Dorsolateral prefrontal cortex (tissue), 120 donors: ENCODE measurements at regions of chr1 and their contacts with region 1.

Region 1: DNA sequence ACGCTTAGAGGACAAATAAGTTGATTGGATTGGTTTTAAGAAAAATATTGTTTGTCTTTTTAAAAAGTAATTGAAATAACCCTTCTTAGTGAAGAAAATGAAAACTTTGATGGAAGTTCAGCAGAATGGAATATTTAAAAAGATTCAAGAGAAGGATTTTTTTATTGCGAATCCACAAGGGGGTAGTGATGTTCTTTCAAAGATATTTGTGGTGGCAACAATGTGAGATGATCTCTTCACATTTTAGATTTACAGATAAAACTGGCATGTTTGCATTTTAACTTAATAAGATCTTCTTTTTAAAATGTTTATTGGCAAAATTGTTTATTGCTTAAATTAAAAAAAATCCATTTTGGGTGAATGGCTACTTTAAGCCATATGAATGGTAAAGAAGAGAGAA is 8.9 kb downstream of the CAMTA1 start:
- DNase-seq: no peak
- H3K4me3 ChIP-seq: no peak overlapping the region
- H3K27ac ChIP-seq: no peak overlapping the region
- H3K27me3 ChIP-seq: no peaks in the 10 kb centered on the region
- CTCF ChIP-seq: peak in 55 of 56 donors; percentile 47 to 83 (median 65)

Region 2: DNA sequence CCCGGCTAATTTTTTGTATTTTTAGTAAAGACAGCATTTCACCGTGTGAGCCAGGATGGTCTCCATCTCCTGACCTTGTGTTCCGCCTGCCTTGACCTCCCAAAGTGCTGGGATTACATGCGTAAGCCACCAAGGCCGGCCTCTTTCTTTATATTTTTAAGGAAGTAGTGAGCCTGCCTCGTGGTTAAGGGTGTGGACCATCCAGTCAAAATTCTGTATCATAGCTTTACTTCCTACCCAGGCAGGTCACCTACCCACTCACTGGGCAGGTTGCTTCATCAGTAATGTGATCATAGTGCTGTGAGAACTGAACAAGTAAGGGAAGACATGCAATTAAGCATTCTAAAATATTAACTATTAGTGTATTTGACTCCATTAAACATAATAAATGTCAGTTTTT is 392.5 kb before region 1 on chr1:
- intact Hi-C with region 1: no loop called
- DNase-seq: no peak
- H3K4me3 ChIP-seq: no peak overlapping the region
- H3K27ac ChIP-seq: no peak overlapping the region
- H3K27me3 ChIP-seq: peaks cover 0 to 5% (median 0%) of the 10 kb centered on the region in 45 donors
- CTCF ChIP-seq: no peak

Region 3: DNA sequence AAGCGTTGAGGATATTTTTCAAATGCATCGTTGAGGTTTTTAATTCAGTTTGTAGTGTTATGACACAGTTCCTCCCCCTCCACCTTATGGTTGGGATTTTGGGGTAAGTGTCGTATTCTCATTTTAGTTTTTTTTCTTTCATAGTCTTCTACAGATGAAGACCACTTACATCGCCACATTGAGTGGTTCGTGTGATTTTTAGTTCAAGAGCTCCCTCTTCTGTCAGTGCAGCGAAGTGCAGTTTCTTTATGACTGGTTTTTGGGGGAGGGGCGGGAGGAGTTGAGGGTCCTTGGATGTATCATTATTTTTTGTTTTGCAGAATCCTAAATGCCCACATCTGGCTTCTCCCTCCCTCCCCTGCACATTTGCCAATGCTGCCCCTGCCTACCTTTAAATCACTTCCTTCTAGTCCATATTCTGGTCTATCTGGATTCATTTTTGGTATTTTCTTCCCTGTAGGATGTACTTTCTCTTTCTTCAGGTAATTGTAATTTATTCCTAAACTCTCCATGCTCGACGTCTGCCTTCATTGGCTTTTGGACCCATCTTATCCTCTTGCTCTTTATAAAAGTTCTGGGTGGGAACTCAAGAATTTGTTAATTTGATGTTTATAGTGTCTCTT is 424.2 kb after region 1 on chr1:
- intact Hi-C with region 1: loop called in 1 of 2 experiments (anchors 10 kb)
- DNase-seq: peak in 1 of 10 donors; percentile 53
- H3K4me3 ChIP-seq: no peak overlapping the region
- H3K27ac ChIP-seq: no peak overlapping the region
- H3K27me3 ChIP-seq: no peaks in the 10 kb centered on the region
- CTCF ChIP-seq: peak; percentile 46 to 82 (median 72)